ENCODE measurements at regions of chr7 and their contacts with region 1.

Region 1: GRCh38 chr7:135710417-135711138 is 17.4 kb downstream of the SLC13A4 start:
- DNase-seq: no peak
- ATAC-seq: peak; percentile 24
- H3K4me3 ChIP-seq: no peak overlapping the region
- H3K27ac ChIP-seq: no peak overlapping the region
- H3K4me1 ChIP-seq: no peaks in the 10 kb centered on the region
- H3K27me3 ChIP-seq: no peaks in the 10 kb centered on the region

Region 2: GRCh38 chr7:135662373-135663114 is 48.0 kb before region 1 on chr7 and contains the start of gene STMP1:
- intact Hi-C with region 1: loop called in 1 of 2 experiments (anchors 5 kb)
- DNase-seq: peak; percentile 98 to 99
- ATAC-seq: peak; percentile 100
- H3K4me3 ChIP-seq: peak within 1 kb of the TSS; percentile 82 to 92
- H3K27ac ChIP-seq: peak within 1 kb of the TSS; percentile 25 to 97
- H3K4me1 ChIP-seq: peaks cover 0 to 3% of the 10 kb centered on the region in 2 donors
- H3K27me3 ChIP-seq: no peaks in the 10 kb centered on the region
- total RNA-seq, gene STMP1: 29.8 to 42.6 TPM

Region 3: GRCh38 chr7:135678612-135679575 is 31.7 kb before region 1 on chr7:
- intact Hi-C with region 1: loop called (anchors 2 to 5 kb)
- DNase-seq: peak; percentile 84 to 87
- ATAC-seq: no peak
- H3K4me3 ChIP-seq: no peak overlapping the region
- H3K27ac ChIP-seq: peak overlapping the region in 1 of 2 donors; percentile 76
- H3K4me1 ChIP-seq: peaks cover 0 to 3% of the 10 kb centered on the region in 2 donors
- H3K27me3 ChIP-seq: no peaks in the 10 kb centered on the region

Region 4: GRCh38 chr7:135690566-135690965 is 20.0 kb before region 1 on chr7:
- intact Hi-C with region 1: no loop called
- DNase-seq: no peak
- ATAC-seq: no peak
- H3K4me3 ChIP-seq: no peak overlapping the region
- H3K27ac ChIP-seq: no peak overlapping the region
- H3K4me1 ChIP-seq: peaks cover 0 to 4% of the 10 kb centered on the region in 2 donors
- H3K27me3 ChIP-seq: no peaks in the 10 kb centered on the region

Region 5: GRCh38 chr7:135745703-135746312 is 35.2 kb after region 1 on chr7:
- intact Hi-C with region 1: loop called in 1 of 2 experiments (anchors 5 kb)
- DNase-seq: peak; percentile 86 to 89
- ATAC-seq: peak; percentile 89
- H3K4me3 ChIP-seq: no peak overlapping the region
- H3K27ac ChIP-seq: peak overlapping the region; percentile 73 to 92
- H3K4me1 ChIP-seq: no peaks in the 10 kb centered on the region
- H3K27me3 ChIP-seq: no peaks in the 10 kb centered on the region

Region 6: GRCh38 chr7:135761751-135762488 is 51.3 kb after region 1 on chr7:
- intact Hi-C with region 1: loop called in 1 of 2 experiments (anchors 5 kb)
- DNase-seq: peak; percentile 83 to 89
- ATAC-seq: peak; percentile 68
- H3K4me3 ChIP-seq: no peak overlapping the region
- H3K27ac ChIP-seq: peak overlapping the region; percentile 92 to 100
- H3K4me1 ChIP-seq: peaks cover 3 to 19% of the 10 kb centered on the region in 2 donors
- H3K27me3 ChIP-seq: no peaks in the 10 kb centered on the region

Measured in aorta (tissue), 5 donors.